Left ventricle myocardium inferior (tissue), 1 donor: ENCODE measurements at regions of chr5 and their contacts with region 1.

Region 1: GRCh38 chr5:149834246-149834855 is 104.2 kb downstream of the PPARGC1B start:
- DNase-seq: no peak
- H3K4me3 ChIP-seq: no peak overlapping the region
- H3K27ac ChIP-seq: peak overlapping the region; percentile 8
- H3K4me1 ChIP-seq: peaks cover 68% of the 10 kb centered on the region
- H3K27me3 ChIP-seq: no peaks in the 10 kb centered on the region
- CTCF ChIP-seq: peak; percentile 71

Region 2: GRCh38 chr5:149938791-149939358 is 104.5 kb after region 1 on chr5:
- intact Hi-C with region 1: no loop called
- DNase-seq: no peak
- H3K4me3 ChIP-seq: no peak overlapping the region
- H3K27ac ChIP-seq: peak overlapping the region; percentile 42
- H3K4me1 ChIP-seq: peaks cover 26% of the 10 kb centered on the region
- H3K27me3 ChIP-seq: no peaks in the 10 kb centered on the region
- CTCF ChIP-seq: no peak

Region 3: DNA sequence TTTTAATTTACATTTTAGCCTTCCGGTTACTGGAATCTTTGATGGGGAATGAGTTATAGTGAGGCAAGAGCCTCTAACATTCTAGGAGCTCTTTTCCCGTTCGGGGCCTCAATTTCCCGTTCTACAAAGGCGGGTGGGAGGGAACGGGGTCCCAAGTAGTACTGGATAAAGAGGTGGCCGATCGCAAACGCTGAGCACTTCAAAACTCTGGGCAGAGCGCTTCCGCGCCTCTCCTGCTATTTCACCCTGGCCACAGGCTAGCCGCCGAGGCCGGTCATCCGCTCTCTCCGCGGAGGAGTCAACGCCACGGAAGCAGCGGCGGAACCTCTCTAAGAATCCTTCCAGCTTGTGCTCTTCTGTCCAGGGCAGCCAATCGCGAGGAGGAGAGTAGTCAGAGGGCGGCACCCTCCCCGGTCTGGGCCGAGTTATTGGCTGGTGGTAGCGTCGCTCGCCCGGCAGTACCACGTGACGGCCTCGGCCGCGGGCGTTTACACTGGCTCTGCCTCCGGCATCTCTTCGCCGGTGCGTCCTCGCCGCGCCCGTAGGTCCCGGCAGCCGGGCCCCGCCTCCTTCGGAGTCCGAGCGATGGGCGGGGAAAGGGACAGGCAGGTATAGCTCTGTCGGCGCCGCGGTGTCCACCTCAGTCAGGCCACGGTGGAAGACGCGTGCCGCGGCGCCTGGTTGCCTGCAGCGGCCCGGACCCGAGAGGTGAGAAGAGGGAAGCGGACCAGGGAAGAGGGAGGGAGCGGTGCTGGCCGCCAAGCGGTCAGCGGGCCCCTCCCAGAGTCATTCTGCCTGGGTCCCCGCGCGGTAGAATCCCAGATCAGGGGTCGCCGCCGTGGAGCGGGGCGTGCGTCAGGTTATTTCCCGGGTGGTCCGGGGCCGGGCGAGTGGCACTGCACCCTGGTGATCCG is 126.2 kb after region 1 on chr5 and contains the start of gene SLC26A2:
- intact Hi-C with region 1: loop called (anchors 10 kb)
- DNase-seq: peak; percentile 97
- H3K4me3 ChIP-seq: peak within 1 kb of the TSS; percentile 80
- H3K27ac ChIP-seq: peak within 1 kb of the TSS; percentile 93
- H3K4me1 ChIP-seq: peaks cover 22% of the 10 kb centered on the region
- H3K27me3 ChIP-seq: no peaks in the 10 kb centered on the region
- CTCF ChIP-seq: no peak
- total RNA-seq, gene SLC26A2: 4.1 TPM

Region 4: GRCh38 chr5:149990518-149991376 is 156.4 kb after region 1 on chr5:
- intact Hi-C with region 1: loop called (anchors 10 kb)
- DNase-seq: peak; percentile 57
- H3K4me3 ChIP-seq: no peak overlapping the region
- H3K27ac ChIP-seq: no peak overlapping the region
- H3K4me1 ChIP-seq: peaks cover 13% of the 10 kb centered on the region
- H3K27me3 ChIP-seq: no peaks in the 10 kb centered on the region
- CTCF ChIP-seq: peak; percentile 96